ENCODE measurements at regions of chr7 and their contacts with region 1.

Region 1: DNA sequence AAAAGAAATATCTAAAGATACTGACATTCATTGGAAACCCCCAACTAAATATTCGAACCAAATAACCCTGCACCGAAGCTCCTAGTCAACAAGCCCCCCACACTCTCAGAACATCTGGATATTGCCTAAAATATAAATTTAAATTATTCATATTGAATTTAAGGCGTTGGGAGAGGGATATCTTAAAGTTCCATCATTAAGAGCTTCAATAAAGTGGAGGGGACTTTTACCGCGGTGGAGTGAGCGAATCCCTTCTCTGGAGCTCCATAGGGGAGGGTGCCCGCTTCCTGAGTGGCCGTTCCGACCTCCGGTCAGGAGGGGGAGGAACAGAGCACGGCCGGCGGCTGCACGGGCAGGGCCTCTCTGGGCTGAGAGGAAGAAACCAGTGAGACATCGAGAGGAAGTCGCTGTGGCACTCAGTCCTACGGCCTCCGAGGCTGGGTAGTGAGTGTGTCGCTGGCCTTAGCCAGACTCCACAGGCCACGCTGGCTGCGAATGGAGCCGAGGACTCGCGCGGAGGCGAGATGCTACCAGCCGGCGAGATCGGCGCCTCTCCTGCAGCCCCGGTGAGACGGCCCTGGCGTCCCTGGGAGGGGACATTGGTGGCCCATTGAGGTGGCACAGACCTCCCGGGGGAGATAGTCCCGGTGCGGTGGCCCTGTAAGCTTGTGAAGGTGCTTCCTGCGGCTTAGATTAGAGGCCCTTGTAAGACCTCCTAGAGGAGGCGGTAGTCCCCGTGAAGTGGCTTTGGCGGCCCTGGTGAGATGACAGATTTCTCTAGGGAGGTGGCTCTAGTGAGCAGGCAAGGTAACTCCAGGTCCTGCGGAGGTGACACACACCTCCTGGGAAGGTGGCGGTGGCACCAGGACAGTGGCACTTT is at the start of gene RINT1:
- DNase-seq: peak; percentile 84 to 94 (median 87)
- ATAC-seq: peak; percentile 91
- H3K4me3 ChIP-seq: peak within 1 kb of the TSS; percentile 90 to 93
- H3K4me3 Mint-ChIP-seq: peak within 1 kb of the TSS; percentile 94
- H3K27ac ChIP-seq: peak within 1 kb of the TSS; percentile 75 to 85
- H3K27ac Mint-ChIP-seq: peak within 1 kb of the TSS; percentile 96
- H3K4me1 ChIP-seq: peaks cover 15% of the 10 kb centered on the region
- H3K4me1 Mint-ChIP-seq: peaks cover 43% of the 10 kb centered on the region
- H3K27me3 ChIP-seq: no peaks in the 10 kb centered on the region
- H3K27me3 Mint-ChIP-seq: no peaks in the 10 kb centered on the region
- CTCF ChIP-seq: peak; percentile 57
- total RNA-seq, gene RINT1: 46.3 to 50.8 TPM

Region 2: GRCh38 chr7:104207731-104208420 is 1324.2 kb before region 1 on chr7 and contains the start of gene ORC5:
- CTCF ChIA-PET with region 1: no interaction called
- POLR2A ChIA-PET with region 1: no interaction called
- intact Hi-C with region 1: loop called (anchors 2 to 5 kb)
- DNase-seq: peak; percentile 41 to 90 (median 73)
- ATAC-seq: peak; percentile 95
- H3K4me3 ChIP-seq: peak within 1 kb of the TSS; percentile 85 to 87
- H3K4me3 Mint-ChIP-seq: peak within 1 kb of the TSS; percentile 92
- H3K27ac ChIP-seq: peak within 1 kb of the TSS; percentile 75 to 91
- H3K27ac Mint-ChIP-seq: peak within 1 kb of the TSS; percentile 95
- H3K4me1 ChIP-seq: peaks cover 17% of the 10 kb centered on the region
- H3K4me1 Mint-ChIP-seq: peaks cover 49% of the 10 kb centered on the region
- H3K27me3 ChIP-seq: no peaks in the 10 kb centered on the region
- H3K27me3 Mint-ChIP-seq: peaks cover 15% of the 10 kb centered on the region
- CTCF ChIP-seq: no peak
- total RNA-seq, gene ORC5: 9.7 to 11.3 TPM

Region 3: DNA sequence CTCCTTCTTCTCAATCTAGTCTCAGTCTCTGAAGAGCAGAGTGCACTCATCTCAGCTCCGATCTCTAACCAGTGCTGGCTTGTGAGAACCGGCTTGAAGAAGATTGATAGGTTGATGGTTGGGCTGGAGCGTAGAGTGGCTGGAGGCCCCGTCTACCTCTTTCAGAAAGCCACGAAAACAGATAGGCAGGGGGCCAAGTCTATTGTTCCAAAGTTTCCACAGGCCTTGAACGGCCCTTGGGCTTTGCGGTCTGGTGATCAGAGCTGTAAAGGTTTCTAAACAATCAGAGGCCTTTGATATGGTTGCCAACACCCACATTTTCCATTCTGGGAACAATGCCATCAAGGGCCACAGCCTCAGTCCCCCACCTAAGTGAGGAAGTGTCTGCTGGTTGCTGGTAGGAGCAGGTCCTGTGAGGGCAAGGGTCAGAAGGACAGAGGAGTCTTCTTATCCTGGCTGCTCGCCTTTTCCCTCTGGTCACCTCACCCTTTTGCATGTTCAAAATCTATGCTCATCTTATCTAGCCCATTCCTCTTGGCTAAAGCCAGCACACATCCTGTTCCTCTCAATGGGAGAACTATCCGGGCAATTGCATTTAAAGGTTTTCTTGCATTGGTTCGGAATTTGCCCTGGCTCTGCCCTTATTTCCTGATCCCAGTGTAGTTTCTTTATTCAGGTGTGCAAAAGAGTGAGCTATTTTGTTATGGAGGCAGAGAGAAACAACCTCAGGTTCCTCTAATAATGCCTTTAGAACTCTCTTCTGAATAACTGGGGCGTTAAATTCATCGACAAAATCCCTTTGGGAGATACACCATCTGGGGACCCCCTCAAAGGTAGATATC is 588.3 kb before region 1 on chr7:
- CTCF ChIA-PET with region 1: interaction called, 3 read pairs
- POLR2A ChIA-PET with region 1: no interaction called
- intact Hi-C with region 1: loop called in 1 of 2 experiments (anchors 1 kb)
- DNase-seq: peak; percentile 40 to 86 (median 69)
- ATAC-seq: peak; percentile 24
- H3K4me3 ChIP-seq: peak overlapping the region; percentile 10 to 18
- H3K4me3 Mint-ChIP-seq: peak overlapping the region; percentile 83
- H3K27ac ChIP-seq: peak overlapping the region; percentile 98
- H3K27ac Mint-ChIP-seq: peak overlapping the region; percentile 100
- H3K4me1 ChIP-seq: peaks cover 52% of the 10 kb centered on the region
- H3K4me1 Mint-ChIP-seq: peaks cover 64% of the 10 kb centered on the region
- H3K27me3 ChIP-seq: no peaks in the 10 kb centered on the region
- H3K27me3 Mint-ChIP-seq: no peaks in the 10 kb centered on the region
- CTCF ChIP-seq: no peak

Region 4: GRCh38 chr7:105268511-105269392 is 263.3 kb before region 1 on chr7:
- CTCF ChIA-PET with region 1: no interaction called
- POLR2A ChIA-PET with region 1: no interaction called
- intact Hi-C with region 1: loop called in 1 of 2 experiments (anchors 1 kb)
- DNase-seq: peak in 2 of 9 experiments; percentile 44 to 64
- ATAC-seq: peak; percentile 68
- H3K4me3 ChIP-seq: peak overlapping the region; percentile 44 to 52
- H3K4me3 Mint-ChIP-seq: peak overlapping the region; percentile 88
- H3K27ac ChIP-seq: peak overlapping the region; percentile 28 to 67
- H3K27ac Mint-ChIP-seq: peak overlapping the region; percentile 91
- H3K4me1 ChIP-seq: peaks cover 31% of the 10 kb centered on the region
- H3K4me1 Mint-ChIP-seq: peaks cover 70% of the 10 kb centered on the region
- H3K27me3 ChIP-seq: no peaks in the 10 kb centered on the region
- H3K27me3 Mint-ChIP-seq: no peaks in the 10 kb centered on the region
- CTCF ChIP-seq: no peak

Region 5: DNA sequence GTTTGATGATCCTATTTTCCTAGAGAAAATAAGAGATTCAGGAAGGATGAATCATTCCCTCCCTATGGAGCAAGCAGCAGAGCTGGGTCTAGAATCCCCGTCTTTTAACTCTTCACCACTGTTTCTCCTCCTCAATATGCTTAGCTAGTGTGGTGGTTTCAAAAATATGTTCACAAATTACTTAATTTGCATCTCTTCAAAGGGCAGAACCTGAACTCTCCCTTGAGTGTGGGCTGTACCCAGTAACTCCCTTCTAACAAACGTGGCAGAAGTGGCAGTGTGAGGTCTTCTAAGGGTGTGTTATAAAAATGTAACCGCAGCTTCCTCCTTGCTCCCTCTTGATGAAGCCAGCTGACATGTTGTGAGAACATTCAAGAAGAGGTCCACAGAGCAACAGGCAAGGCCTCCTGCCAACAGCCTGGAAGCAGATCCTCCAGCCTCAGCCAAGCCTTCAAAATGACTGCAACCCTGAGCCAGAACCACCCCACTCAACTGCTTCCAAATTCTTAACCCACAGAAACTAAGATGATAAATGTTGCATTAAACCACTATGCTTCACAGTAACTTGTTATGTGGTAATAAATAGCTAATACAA is 179.9 kb before region 1 on chr7:
- CTCF ChIA-PET with region 1: no interaction called
- POLR2A ChIA-PET with region 1: interaction called, 5 read pairs
- intact Hi-C with region 1: loop called in 1 of 2 experiments (anchors 2 kb)
- DNase-seq: peak; percentile 27 to 91 (median 56)
- ATAC-seq: peak; percentile 94
- H3K4me3 ChIP-seq: peak overlapping the region in 1 of 2 experiments; percentile 16
- H3K4me3 Mint-ChIP-seq: peak overlapping the region; percentile 63
- H3K27ac ChIP-seq: peak overlapping the region in 1 of 2 experiments; percentile 68
- H3K27ac Mint-ChIP-seq: peak overlapping the region; percentile 89
- H3K4me1 ChIP-seq: peaks cover 59% of the 10 kb centered on the region
- H3K4me1 Mint-ChIP-seq: peaks cover 66% of the 10 kb centered on the region
- H3K27me3 ChIP-seq: no peaks in the 10 kb centered on the region
- H3K27me3 Mint-ChIP-seq: no peaks in the 10 kb centered on the region
- CTCF ChIP-seq: no peak

Region 6: GRCh38 chr7:105388373-105389087 is 143.5 kb before region 1 on chr7 and contains the start of gene SRPK2:
- CTCF ChIA-PET with region 1: no interaction called
- POLR2A ChIA-PET with region 1: no interaction called
- intact Hi-C with region 1: loop called in 1 of 2 experiments (anchors 5 kb)
- DNase-seq: peak; percentile 39 to 86 (median 76)
- ATAC-seq: peak; percentile 80
- H3K4me3 ChIP-seq: peak within 1 kb of the TSS; percentile 65 to 85
- H3K4me3 Mint-ChIP-seq: peak within 1 kb of the TSS; percentile 95
- H3K27ac ChIP-seq: peak within 1 kb of the TSS; percentile 59
- H3K27ac Mint-ChIP-seq: peak within 1 kb of the TSS; percentile 95
- H3K4me1 ChIP-seq: peaks cover 14% of the 10 kb centered on the region
- H3K4me1 Mint-ChIP-seq: peaks cover 40% of the 10 kb centered on the region
- H3K27me3 ChIP-seq: no peaks in the 10 kb centered on the region
- H3K27me3 Mint-ChIP-seq: no peaks in the 10 kb centered on the region
- CTCF ChIP-seq: no peak
- total RNA-seq, gene SRPK2: 29.2 to 29.7 TPM

Region 7: DNA sequence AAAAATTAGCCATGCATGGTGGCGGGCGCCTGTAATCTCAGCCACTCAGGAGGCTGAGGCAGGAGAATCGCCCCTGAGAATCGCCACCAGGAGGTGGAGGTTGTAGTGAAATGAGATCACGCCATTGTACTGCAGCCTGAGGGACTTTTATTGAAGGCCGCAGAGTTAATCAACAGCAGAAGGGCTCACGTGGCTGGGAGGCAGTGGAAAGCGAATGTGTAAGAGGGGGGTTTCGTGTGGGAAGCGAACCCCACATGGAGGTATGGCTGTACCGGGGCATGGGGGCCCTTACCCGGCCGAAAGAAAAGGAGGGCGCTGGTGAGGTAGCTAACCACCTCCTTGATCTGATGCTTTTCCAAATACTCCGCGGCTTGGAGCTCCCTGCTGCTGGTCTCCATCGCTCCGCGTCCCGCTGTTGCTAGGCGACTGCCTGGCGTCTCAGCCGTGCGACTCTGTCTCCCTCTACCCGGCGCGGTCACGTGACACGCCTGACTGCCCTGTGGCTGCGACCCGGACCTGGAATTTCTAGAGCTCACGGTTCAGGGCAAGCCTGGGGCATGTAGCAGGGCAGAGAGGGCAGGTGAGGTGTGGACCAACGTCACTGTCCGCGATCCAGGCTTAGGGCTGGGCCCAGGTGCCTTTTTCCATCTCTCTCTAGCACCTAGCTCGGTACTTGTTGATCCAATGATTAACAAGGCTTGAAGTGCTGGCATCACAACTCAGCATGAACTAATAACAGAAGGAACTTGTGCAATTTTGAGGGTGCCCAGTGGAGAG is 49.2 kb after region 1 on chr7 and contains the start of gene EFCAB10:
- CTCF ChIA-PET with region 1: no interaction called
- POLR2A ChIA-PET with region 1: no interaction called
- intact Hi-C with region 1: no loop called
- DNase-seq: peak in 7 of 9 experiments; percentile 2 to 54 (median 35)
- ATAC-seq: peak; percentile 44
- H3K4me3 ChIP-seq: peak within 1 kb of the TSS; percentile 21 to 34
- H3K4me3 Mint-ChIP-seq: peak within 1 kb of the TSS; percentile 73
- H3K27ac ChIP-seq: no peak within 1 kb of the TSS
- H3K27ac Mint-ChIP-seq: no peak within 1 kb of the TSS
- H3K4me1 ChIP-seq: no peaks in the 10 kb centered on the region
- H3K4me1 Mint-ChIP-seq: peaks cover 4% of the 10 kb centered on the region
- H3K27me3 ChIP-seq: peaks cover 4 to 8% of the 10 kb centered on the region in 2 experiments
- H3K27me3 Mint-ChIP-seq: peaks cover 15% of the 10 kb centered on the region
- CTCF ChIP-seq: no peak
- total RNA-seq, gene EFCAB10: 0.47 TPM in 1 of 2 experiments, not detected in the other

Region 8: DNA sequence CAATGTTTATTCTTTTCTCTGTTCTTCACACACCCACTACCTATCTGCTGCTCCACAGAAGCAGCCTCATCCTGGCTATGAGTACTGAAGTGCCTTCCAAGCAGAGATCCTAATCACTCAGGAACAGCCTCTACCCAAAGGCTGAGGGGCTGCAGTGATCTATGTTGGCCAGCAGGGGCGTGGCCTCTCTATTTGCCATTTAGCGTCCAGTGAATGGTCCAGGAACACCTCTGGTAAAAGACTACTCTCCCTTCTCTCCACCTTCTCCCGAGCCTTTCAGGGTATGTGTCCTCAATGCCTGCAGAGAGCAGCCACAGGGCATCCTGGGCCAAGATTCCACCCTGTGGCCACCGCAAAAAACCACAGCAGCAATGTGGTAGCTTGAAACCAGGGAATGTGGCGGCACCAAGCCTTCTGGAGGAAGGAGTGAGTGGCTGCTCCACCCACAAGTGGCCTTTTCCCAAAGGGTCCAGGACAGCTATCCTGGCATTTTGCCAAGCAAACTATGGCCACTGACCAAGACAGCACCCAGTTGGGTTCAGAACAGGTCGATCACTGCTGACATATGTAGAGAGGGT is 509.2 kb after region 1 on chr7:
- CTCF ChIA-PET with region 1: no interaction called
- POLR2A ChIA-PET with region 1: no interaction called
- intact Hi-C with region 1: loop called in 1 of 2 experiments (anchors 10 kb)
- DNase-seq: peak in 3 of 9 experiments; percentile 40 to 59 (median 51)
- ATAC-seq: peak; percentile 32
- H3K4me3 ChIP-seq: no peak overlapping the region
- H3K4me3 Mint-ChIP-seq: peak overlapping the region; percentile 6
- H3K27ac ChIP-seq: no peak overlapping the region
- H3K27ac Mint-ChIP-seq: peak overlapping the region; percentile 68
- H3K4me1 ChIP-seq: peaks cover 28% of the 10 kb centered on the region
- H3K4me1 Mint-ChIP-seq: peaks cover 39% of the 10 kb centered on the region
- H3K27me3 ChIP-seq: no peaks in the 10 kb centered on the region
- H3K27me3 Mint-ChIP-seq: no peaks in the 10 kb centered on the region
- CTCF ChIP-seq: peak; percentile 61

Measured in CD8-positive, alpha-beta T cell (primary cell).